ENCODE measurements at regions of chr16 and their contacts with region 1.

Region 1: GRCh38 chr16:85253084-85253941 is 141.0 kb upstream of the CIBAR2 start:
- DNase-seq: peak; percentile 71
- ATAC-seq: peak; percentile 83
- H3K4me3 Mint-ChIP-seq: no peak overlapping the region
- H3K27ac Mint-ChIP-seq: no peak overlapping the region
- H3K4me1 Mint-ChIP-seq: peaks cover 14% of the 10 kb centered on the region
- H3K27me3 Mint-ChIP-seq: peaks cover 12% of the 10 kb centered on the region

Region 2: GRCh38 chr16:85234310-85235204 is 18.8 kb before region 1 on chr16:
- CTCF ChIA-PET with region 1: interaction called, 13 read pairs
- DNase-seq: no peak
- ATAC-seq: no peak
- H3K4me3 Mint-ChIP-seq: no peak overlapping the region
- H3K27ac Mint-ChIP-seq: no peak overlapping the region
- H3K4me1 Mint-ChIP-seq: peaks cover 3% of the 10 kb centered on the region
- H3K27me3 Mint-ChIP-seq: peaks cover 15% of the 10 kb centered on the region

Region 3: GRCh38 chr16:85275533-85276249 is 22.4 kb after region 1 on chr16:
- CTCF ChIA-PET with region 1: interaction called, 16 read pairs
- DNase-seq: peak; percentile 71
- ATAC-seq: peak; percentile 76
- H3K4me3 Mint-ChIP-seq: no peak overlapping the region
- H3K27ac Mint-ChIP-seq: no peak overlapping the region
- H3K4me1 Mint-ChIP-seq: no peaks in the 10 kb centered on the region
- H3K27me3 Mint-ChIP-seq: no peaks in the 10 kb centered on the region

Region 4: GRCh38 chr16:85296859-85297660 is 43.7 kb after region 1 on chr16:
- CTCF ChIA-PET with region 1: interaction called, 13 read pairs
- DNase-seq: peak; percentile 66
- ATAC-seq: peak; percentile 89
- H3K4me3 Mint-ChIP-seq: no peak overlapping the region
- H3K27ac Mint-ChIP-seq: no peak overlapping the region
- H3K4me1 Mint-ChIP-seq: no peaks in the 10 kb centered on the region
- H3K27me3 Mint-ChIP-seq: no peaks in the 10 kb centered on the region

Measured in activated CD8-positive, alpha-beta memory T cell treated with anti-CD3 and anti-CD28 coated beads, Interleukin-2, amount 10 ng/mL, durations not matched to agents 7 days and 5 days (primary cell).